ENCODE measurements at regions of chr18 and their contacts with region 1.

Region 1: GRCh38 chr18:36129300-36130038 is at the starts of genes ELP2 and SLC39A6:
- DNase-seq: peak; percentile 98
- H3K4me3 ChIP-seq: peak within 1 kb of the TSS; percentile 64 to 96 (median 94)
- H3K27ac ChIP-seq: peak within 1 kb of the TSS; percentile 98
- H3K4me1 ChIP-seq: peaks cover 15% of the 10 kb centered on the region
- H3K27me3 ChIP-seq: no peaks in the 10 kb centered on the region
- CTCF ChIP-seq: no peak
- POLR2A ChIP-seq: peak; percentile 67
- total RNA-seq, gene ELP2: 74.8 and 90.5 TPM in 2 replicates
- total RNA-seq, gene SLC39A6: 13.2 and 13.8 TPM in 2 replicates

Region 2: GRCh38 chr18:35972197-35973052 is 157.0 kb before region 1 on chr18 and contains the start of gene RMP24:
- CTCF ChIA-PET with region 1: no interaction called
- POLR2A ChIA-PET with region 1: no interaction called
- dilution Hi-C with region 1: no loop called
- intact Hi-C with region 1: loop called (anchors 1 kb)
- DNase-seq: peak; percentile 89
- H3K4me3 ChIP-seq: peak within 1 kb of the TSS; percentile 83 to 99 (median 91)
- H3K27ac ChIP-seq: peak within 1 kb of the TSS; percentile 91
- H3K4me1 ChIP-seq: peaks cover 18% of the 10 kb centered on the region
- H3K27me3 ChIP-seq: peaks cover 4% of the 10 kb centered on the region in 2 experiments
- CTCF ChIP-seq: no peak
- POLR2A ChIP-seq: peak; percentile 78

Region 3: GRCh38 chr18:36035253-36035652 is 94.2 kb before region 1 on chr18:
- CTCF ChIA-PET with region 1: no interaction called
- POLR2A ChIA-PET with region 1: no interaction called
- dilution Hi-C with region 1: no loop called
- intact Hi-C with region 1: loop called (anchors 2 kb)
- DNase-seq: peak; percentile 94
- H3K4me3 ChIP-seq: no peak overlapping the region
- H3K27ac ChIP-seq: no peak overlapping the region
- H3K4me1 ChIP-seq: peaks cover 22% of the 10 kb centered on the region
- H3K27me3 ChIP-seq: no peaks in the 10 kb centered on the region
- CTCF ChIP-seq: no peak
- POLR2A ChIP-seq: peak; percentile 71

Region 4: GRCh38 chr18:36158261-36158867 is 28.9 kb after region 1 on chr18:
- CTCF ChIA-PET with region 1: interaction called, 3 read pairs
- POLR2A ChIA-PET with region 1: no interaction called
- dilution Hi-C with region 1: no loop called
- intact Hi-C with region 1: loop called (anchors 1 kb)
- DNase-seq: peak; percentile 93
- H3K4me3 ChIP-seq: no peak overlapping the region
- H3K27ac ChIP-seq: peak overlapping the region; percentile 74
- H3K4me1 ChIP-seq: peaks cover 34% of the 10 kb centered on the region
- H3K27me3 ChIP-seq: no peaks in the 10 kb centered on the region
- CTCF ChIP-seq: no peak
- POLR2A ChIP-seq: peak; percentile 49

Region 5: DNA sequence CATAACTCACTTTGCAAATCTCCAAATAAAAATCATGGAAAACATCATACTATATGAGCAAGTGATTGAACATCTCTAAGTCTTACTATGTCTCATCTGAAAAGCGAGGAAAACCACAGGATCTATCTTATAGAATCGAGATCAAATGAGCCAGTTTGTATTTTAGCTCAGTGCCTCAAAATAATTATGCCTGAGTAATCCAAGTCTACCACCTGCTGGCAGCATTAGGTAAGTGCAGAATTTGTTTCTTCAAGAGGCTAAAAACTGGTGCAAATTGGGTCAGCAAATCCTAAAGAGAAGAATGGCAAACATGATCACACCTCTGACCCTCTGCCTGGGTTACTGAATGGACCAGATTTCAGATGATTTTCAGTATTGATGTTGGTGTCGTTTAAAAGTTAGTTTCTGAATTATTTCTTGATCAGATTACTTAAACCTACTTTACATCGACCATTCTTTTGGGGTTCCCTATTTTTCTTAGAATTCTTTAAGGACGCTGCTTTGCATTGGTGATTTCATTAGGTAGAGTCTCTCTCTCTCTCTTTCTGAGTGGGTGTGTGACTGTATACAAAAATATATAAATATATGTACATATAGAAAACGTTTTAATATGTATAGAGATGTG is 155.3 kb after region 1 on chr18:
- CTCF ChIA-PET with region 1: interaction called, 26 read pairs
- POLR2A ChIA-PET with region 1: no interaction called
- dilution Hi-C with region 1: no loop called
- intact Hi-C with region 1: no loop called
- DNase-seq: peak; percentile 71
- H3K4me3 ChIP-seq: no peak overlapping the region
- H3K27ac ChIP-seq: no peak overlapping the region
- H3K4me1 ChIP-seq: no peaks in the 10 kb centered on the region
- H3K27me3 ChIP-seq: peaks cover 6 to 19% of the 10 kb centered on the region in 2 experiments
- CTCF ChIP-seq: peak; percentile 63 to 65
- POLR2A ChIP-seq: no peak

Region 6: GRCh38 chr18:36424741-36425142 is 295.3 kb after region 1 on chr18:
- CTCF ChIA-PET with region 1: no interaction called
- POLR2A ChIA-PET with region 1: no interaction called
- dilution Hi-C with region 1: no loop called
- intact Hi-C with region 1: no loop called
- DNase-seq: no peak
- H3K4me3 ChIP-seq: no peak overlapping the region
- H3K27ac ChIP-seq: no peak overlapping the region
- H3K4me1 ChIP-seq: no peaks in the 10 kb centered on the region
- H3K27me3 ChIP-seq: no peaks in the 10 kb centered on the region
- CTCF ChIP-seq: no peak
- POLR2A ChIP-seq: no peak

Measured in endothelial cell of umbilical vein (primary cell).